ENCODE measurements at regions of chr6 and their contacts with region 1.

Region 1: DNA sequence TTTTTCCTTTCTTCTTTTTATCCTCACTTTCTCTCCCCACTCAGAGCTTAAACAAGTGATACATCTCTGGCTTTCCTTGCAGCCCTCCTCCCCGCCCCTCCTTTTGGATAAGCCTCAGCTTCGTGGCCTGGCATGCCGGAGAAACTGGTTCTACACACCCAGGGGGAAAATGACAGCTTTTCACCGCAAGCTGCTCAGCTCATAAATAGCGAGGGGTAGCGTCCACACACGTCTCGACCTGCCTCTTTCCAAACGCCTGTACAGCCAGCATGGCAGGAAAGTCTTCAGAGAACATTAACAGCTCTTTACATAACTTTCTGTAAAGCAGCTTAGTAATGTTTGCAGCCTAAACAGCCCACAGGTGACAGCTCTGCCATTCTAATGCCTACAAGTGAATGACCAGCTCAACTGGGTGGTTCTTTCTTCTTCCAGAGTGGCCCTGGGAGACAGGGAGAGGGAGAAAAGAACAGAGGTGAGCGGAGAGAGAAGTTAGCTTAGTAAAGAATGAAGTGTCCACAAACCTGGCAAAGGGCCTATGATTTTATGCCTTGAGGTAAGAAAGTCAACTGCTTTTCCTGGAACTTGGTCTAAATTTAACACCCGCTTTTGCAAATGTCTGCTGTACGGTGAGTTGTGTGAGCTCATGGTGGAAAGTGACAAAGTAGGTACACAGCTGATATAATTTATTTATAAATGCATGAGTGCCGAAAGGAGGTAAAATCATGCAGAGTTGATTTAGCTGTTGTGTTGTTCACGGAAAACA is 251.5 kb downstream of the TFAP2A start:
- DNase-seq: no peak
- H3K4me3 ChIP-seq: no peak overlapping the region
- H3K27ac ChIP-seq: no peak overlapping the region
- H3K4me1 ChIP-seq: no peaks in the 10 kb centered on the region
- H3K27me3 ChIP-seq: no peaks in the 10 kb centered on the region
- CTCF ChIP-seq: no peak
- EP300 ChIP-seq: no peak
- POLR2A ChIP-seq: no peak

Region 2: GRCh38 chr6:10180137-10181100 is 17.0 kb after region 1 on chr6:
- intact Hi-C with region 1: loop called in 1 of 4 experiments (anchors 1 kb)
- DNase-seq: no peak
- H3K4me3 ChIP-seq: no peak overlapping the region
- H3K27ac ChIP-seq: no peak overlapping the region
- H3K4me1 ChIP-seq: no peaks in the 10 kb centered on the region
- H3K27me3 ChIP-seq: no peaks in the 10 kb centered on the region
- CTCF ChIP-seq: no peak
- EP300 ChIP-seq: no peak
- POLR2A ChIP-seq: no peak

Region 3: DNA sequence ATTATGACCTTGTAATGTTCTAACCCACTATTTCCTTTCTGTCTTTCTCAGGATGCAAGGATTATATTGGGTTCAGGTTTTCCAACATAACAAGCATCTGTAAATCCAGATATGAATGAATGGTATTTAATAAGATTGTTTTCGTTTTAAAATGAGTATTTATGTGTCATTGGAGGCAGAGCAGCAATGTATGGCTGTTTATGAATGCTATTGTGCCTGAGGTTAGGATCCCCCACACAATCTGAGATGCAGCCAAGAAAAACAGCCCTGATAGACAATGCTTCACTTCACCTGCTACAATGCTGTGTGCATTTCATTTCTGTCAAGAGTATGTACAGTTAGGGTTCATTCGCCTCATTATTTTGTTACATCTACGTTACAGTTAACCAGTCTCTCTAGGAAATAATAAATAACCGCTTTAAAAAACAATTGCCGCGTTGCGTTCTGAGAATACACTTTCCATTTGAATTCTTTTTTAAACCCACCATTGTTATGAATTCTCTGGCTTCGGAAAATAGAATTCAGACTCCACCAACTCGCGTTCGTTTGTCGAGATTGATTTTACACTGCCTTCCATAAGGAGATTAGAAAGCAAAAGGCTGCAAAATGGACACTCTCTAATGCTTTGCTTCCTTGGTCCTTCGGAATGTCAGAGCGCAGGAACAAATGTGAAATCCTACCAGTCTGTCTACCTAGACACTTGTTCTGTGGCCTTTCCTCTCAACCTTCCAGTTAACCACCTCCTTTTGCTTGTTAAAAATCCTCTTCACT is 232.0 kb after region 1 on chr6:
- intact Hi-C with region 1: no loop called
- DNase-seq: no peak
- H3K4me3 ChIP-seq: no peak overlapping the region
- H3K27ac ChIP-seq: no peak overlapping the region
- H3K4me1 ChIP-seq: no peaks in the 10 kb centered on the region
- H3K27me3 ChIP-seq: no peaks in the 10 kb centered on the region
- CTCF ChIP-seq: no peak
- EP300 ChIP-seq: no peak
- POLR2A ChIP-seq: no peak

Measured in ovary (tissue), 10 donors.